A549 (cell line): ENCODE measurements at regions of chrX and their contacts with region 1.

Region 1: GRCh38 chrX:151359931-151360871 is 36.8 kb upstream of the VMA21 start:
- DNase-seq: peak in 1 of 2 experiments; percentile 41
- ATAC-seq: peak; percentile 93 to 98
- H3K4me3 ChIP-seq: peak overlapping the region; percentile 23; the same call in 1 of the 3 replicates
- H3K27ac ChIP-seq: no peak overlapping the region
- H3K4me1 ChIP-seq: no peaks in the 10 kb centered on the region
- CTCF ChIP-seq: peak; percentile 54
- EP300 ChIP-seq: no peak
- POLR2A ChIP-seq: no peak
- RAD21 ChIP-seq: peak; percentile 54 to 56

Region 2: DNA sequence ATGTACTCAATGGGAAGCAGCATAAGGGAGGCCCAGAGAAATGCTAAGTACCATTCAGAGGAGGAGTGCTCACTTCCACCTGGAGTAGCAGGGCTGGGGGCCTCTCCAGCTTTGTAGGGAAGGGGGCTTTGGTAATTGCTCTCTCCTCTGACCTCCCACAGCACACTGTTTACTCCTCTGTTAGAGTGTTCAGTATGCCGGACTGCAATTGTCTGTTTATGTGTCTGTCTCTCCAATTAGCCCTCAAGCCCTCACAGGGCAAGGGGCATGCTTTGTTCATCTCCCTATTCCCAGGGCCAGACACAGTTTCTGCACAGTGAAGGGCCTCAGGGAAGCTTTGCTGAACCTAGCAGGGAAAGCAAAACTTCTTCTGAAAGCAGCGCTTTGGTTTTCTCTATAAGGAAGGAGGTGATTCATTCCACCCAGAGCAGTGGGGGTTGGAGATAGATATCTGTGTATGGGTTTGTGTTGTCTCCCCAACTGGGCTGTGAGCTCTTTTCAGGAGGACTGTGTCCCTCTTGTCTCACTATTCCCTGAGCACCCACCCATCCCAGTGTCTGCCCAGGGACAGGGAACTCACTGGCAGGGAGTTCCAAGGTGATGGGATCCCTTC is 13.2 kb before region 1 on chrX:
- CTCF ChIA-PET with region 1: interaction called, 11 read pairs
- POLR2A ChIA-PET with region 1: no interaction called
- DNase-seq: no peak
- ATAC-seq: no peak
- H3K4me3 ChIP-seq: no peak overlapping the region
- H3K27ac ChIP-seq: no peak overlapping the region
- H3K4me1 ChIP-seq: no peaks in the 10 kb centered on the region
- CTCF ChIP-seq: no peak
- EP300 ChIP-seq: no peak
- POLR2A ChIP-seq: no peak
- RAD21 ChIP-seq: no peak

Region 3: GRCh38 chrX:151543706-151544105 is 183.5 kb after region 1 on chrX:
- CTCF ChIA-PET with region 1: no interaction called
- POLR2A ChIA-PET with region 1: no interaction called
- DNase-seq: peak in 1 of 2 experiments; percentile 17
- ATAC-seq: no peak
- H3K4me3 ChIP-seq: no peak overlapping the region
- H3K27ac ChIP-seq: no peak overlapping the region
- H3K4me1 ChIP-seq: no peaks in the 10 kb centered on the region
- CTCF ChIP-seq: no peak
- EP300 ChIP-seq: no peak
- POLR2A ChIP-seq: no peak
- RAD21 ChIP-seq: no peak